CD4-positive, alpha-beta memory T cell (primary cell): ENCODE measurements at regions of chr2 and their contacts with region 1.

Region 1: GRCh38 chr2:29014811-29015421 is 33.8 kb downstream of the TOGARAM2 start:
- DNase-seq: peak; percentile 75 to 88 (median 80)
- H3K4me3 ChIP-seq: peak overlapping the region; percentile 25 to 48
- H3K4me3 Mint-ChIP-seq: peak overlapping the region; percentile 83 to 95 (median 88)
- H3K27ac ChIP-seq: peak overlapping the region; percentile 86
- H3K27ac Mint-ChIP-seq: peak overlapping the region; percentile 99 to 100 (median 100)
- H3K4me1 ChIP-seq: peaks cover 78% of the 10 kb centered on the region
- H3K4me1 Mint-ChIP-seq: peaks cover 62 to 84% (median 72%) of the 10 kb centered on the region in 4 donors
- H3K27me3 ChIP-seq: no peaks in the 10 kb centered on the region
- H3K27me3 Mint-ChIP-seq: no peaks in the 10 kb centered on the region

Region 2: DNA sequence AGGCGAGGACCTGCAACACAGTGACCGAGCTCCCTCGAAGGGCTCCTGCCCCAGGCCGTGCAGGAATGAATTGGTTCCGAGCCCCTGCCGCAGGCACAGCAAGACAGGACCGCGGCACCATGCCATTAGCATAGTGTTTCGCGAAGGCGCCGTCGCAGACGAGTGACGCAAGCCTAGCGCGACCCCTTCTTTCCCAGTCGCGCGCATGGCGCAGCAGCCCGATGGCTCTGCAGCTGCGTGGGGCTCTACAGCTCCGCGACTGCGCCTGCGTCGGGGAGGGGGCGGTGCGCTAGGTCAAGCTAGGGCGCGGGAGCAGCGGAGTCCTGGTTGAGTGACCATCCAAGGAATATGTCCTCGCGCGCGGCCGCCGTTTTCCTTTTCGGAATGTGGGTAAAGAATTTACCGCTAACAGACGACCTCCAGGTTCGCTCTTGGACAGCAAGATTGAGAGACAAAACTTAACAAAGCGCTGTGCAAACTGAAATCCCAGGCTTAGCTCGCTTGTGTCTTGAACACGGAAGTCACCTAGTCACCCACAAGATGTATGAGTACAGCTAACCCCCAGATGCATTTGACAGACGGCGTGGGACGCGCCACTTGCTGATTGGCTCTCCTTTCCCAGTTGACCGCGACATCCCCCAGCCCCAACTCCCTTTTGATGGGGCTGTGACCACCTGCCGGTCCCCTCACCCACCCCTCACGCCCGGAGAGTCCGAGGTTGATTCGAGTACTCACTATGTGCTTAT is 144.6 kb before region 1 on chr2 and contains the start of gene TRMT61B:
- CTCF ChIA-PET with region 1: interaction called, 4 read pairs
- POLR2A ChIA-PET with region 1: interaction called, 13 read pairs
- intact Hi-C with region 1: no loop called
- DNase-seq: peak; percentile 95 to 96 (median 96)
- H3K4me3 ChIP-seq: peak within 1 kb of the TSS; percentile 99
- H3K4me3 Mint-ChIP-seq: peak within 1 kb of the TSS; percentile 93 to 100 (median 96)
- H3K27ac ChIP-seq: peak within 1 kb of the TSS; percentile 95
- H3K27ac Mint-ChIP-seq: peak within 1 kb of the TSS; percentile 98 to 100 (median 100)
- H3K4me1 ChIP-seq: peaks cover 39% of the 10 kb centered on the region
- H3K4me1 Mint-ChIP-seq: peaks cover 20 to 46% (median 31%) of the 10 kb centered on the region in 4 donors
- H3K27me3 ChIP-seq: no peaks in the 10 kb centered on the region
- H3K27me3 Mint-ChIP-seq: peaks cover 0 to 2% of the 10 kb centered on the region in 2 donors
- total RNA-seq, gene TRMT61B: 17.4 TPM

Region 3: GRCh38 chr2:28944535-28945248 is 70.2 kb before region 1 on chr2:
- CTCF ChIA-PET with region 1: no interaction called
- POLR2A ChIA-PET with region 1: no interaction called
- intact Hi-C with region 1: no loop called
- DNase-seq: no peak
- H3K4me3 ChIP-seq: no peak overlapping the region
- H3K4me3 Mint-ChIP-seq: no peak overlapping the region
- H3K27ac ChIP-seq: no peak overlapping the region
- H3K27ac Mint-ChIP-seq: no peak overlapping the region
- H3K4me1 ChIP-seq: no peaks in the 10 kb centered on the region
- H3K4me1 Mint-ChIP-seq: peaks cover 0 to 2% (median 0%) of the 10 kb centered on the region in 4 donors
- H3K27me3 ChIP-seq: no peaks in the 10 kb centered on the region
- H3K27me3 Mint-ChIP-seq: no peaks in the 10 kb centered on the region

Region 4: DNA sequence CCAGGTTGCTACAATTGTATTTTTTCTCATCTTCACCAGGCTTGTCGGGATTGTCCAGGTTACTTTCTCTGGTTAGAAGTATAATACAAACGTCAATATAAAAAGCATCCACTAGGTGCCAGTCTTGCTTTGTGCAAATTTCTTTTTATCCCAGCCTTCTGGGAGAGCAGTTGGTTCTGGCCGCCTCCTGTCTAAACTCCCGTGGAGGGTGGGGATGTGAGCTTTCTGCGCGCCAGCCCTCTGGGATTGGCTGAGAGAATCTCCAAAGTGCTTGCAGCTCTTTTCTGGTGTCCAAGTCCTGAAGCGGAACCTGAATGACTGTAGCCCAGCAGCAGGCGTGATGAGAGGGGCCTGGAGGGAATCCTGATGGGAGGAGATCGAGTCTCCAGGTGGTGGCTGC is 56.2 kb before region 1 on chr2:
- CTCF ChIA-PET with region 1: interaction called, 38 read pairs
- POLR2A ChIA-PET with region 1: interaction called, 9 read pairs
- intact Hi-C with region 1: loop called (anchors 1 kb)
- DNase-seq: peak in 4 of 5 donors; percentile 51 to 67 (median 64)
- H3K4me3 ChIP-seq: no peak overlapping the region
- H3K4me3 Mint-ChIP-seq: no peak overlapping the region
- H3K27ac ChIP-seq: no peak overlapping the region
- H3K27ac Mint-ChIP-seq: peak overlapping the region in 1 of 7 donors; percentile 7
- H3K4me1 ChIP-seq: peaks cover 10% of the 10 kb centered on the region
- H3K4me1 Mint-ChIP-seq: peaks cover 0 to 10% (median 5%) of the 10 kb centered on the region in 4 donors
- H3K27me3 ChIP-seq: no peaks in the 10 kb centered on the region
- H3K27me3 Mint-ChIP-seq: no peaks in the 10 kb centered on the region

Region 5: GRCh38 chr2:29025756-29026155 is 10.8 kb after region 1 on chr2:
- CTCF ChIA-PET with region 1: interaction called, 14 read pairs
- POLR2A ChIA-PET with region 1: interaction called, 5 read pairs
- intact Hi-C with region 1: no loop called
- DNase-seq: no peak
- H3K4me3 ChIP-seq: no peak overlapping the region
- H3K4me3 Mint-ChIP-seq: no peak overlapping the region
- H3K27ac ChIP-seq: no peak overlapping the region
- H3K27ac Mint-ChIP-seq: peak overlapping the region in 1 of 7 donors; percentile 63
- H3K4me1 ChIP-seq: no peaks in the 10 kb centered on the region
- H3K4me1 Mint-ChIP-seq: peaks cover 0 to 7% (median 2%) of the 10 kb centered on the region in 4 donors
- H3K27me3 ChIP-seq: no peaks in the 10 kb centered on the region
- H3K27me3 Mint-ChIP-seq: no peaks in the 10 kb centered on the region

Region 6: DNA sequence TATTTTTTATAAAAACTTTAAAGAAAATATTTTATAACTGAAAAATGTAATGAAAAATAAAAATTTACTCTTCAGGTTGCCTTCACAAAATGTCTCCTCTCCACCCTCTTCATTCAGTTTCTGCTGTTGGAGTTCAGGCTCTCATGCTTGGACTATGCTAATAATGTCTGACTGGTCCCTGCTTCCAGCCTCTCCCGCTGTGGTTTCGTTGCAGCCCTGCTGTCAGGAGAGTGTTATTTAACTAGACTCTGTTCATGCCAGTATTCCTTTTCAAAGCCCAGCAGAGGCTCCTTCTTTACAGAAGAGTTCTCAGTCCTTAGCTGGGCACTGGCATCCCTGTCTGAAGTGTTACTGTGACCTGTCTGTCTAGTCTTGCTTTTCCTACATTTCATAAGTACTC is 140.7 kb after region 1 on chr2:
- CTCF ChIA-PET with region 1: no interaction called
- POLR2A ChIA-PET with region 1: no interaction called
- intact Hi-C with region 1: no loop called
- DNase-seq: no peak
- H3K4me3 ChIP-seq: no peak overlapping the region
- H3K4me3 Mint-ChIP-seq: no peak overlapping the region
- H3K27ac ChIP-seq: no peak overlapping the region
- H3K27ac Mint-ChIP-seq: peak overlapping the region in 2 of 7 donors; percentile 43 to 62
- H3K4me1 ChIP-seq: no peaks in the 10 kb centered on the region
- H3K4me1 Mint-ChIP-seq: peaks cover 0 to 1% (median 0%) of the 10 kb centered on the region in 4 donors
- H3K27me3 ChIP-seq: no peaks in the 10 kb centered on the region
- H3K27me3 Mint-ChIP-seq: no peaks in the 10 kb centered on the region

Region 7: GRCh38 chr2:29196792-29197788 is 182.2 kb after region 1 on chr2:
- CTCF ChIA-PET with region 1: interaction called, 4 read pairs
- POLR2A ChIA-PET with region 1: no interaction called
- intact Hi-C with region 1: loop called (anchors 1 kb)
- DNase-seq: peak; percentile 66 to 79 (median 71)
- H3K4me3 ChIP-seq: no peak overlapping the region
- H3K4me3 Mint-ChIP-seq: no peak overlapping the region
- H3K27ac ChIP-seq: no peak overlapping the region
- H3K27ac Mint-ChIP-seq: peak overlapping the region in 2 of 7 donors; percentile 15 to 81
- H3K4me1 ChIP-seq: no peaks in the 10 kb centered on the region
- H3K4me1 Mint-ChIP-seq: peaks cover 0 to 9% (median 1%) of the 10 kb centered on the region in 4 donors
- H3K27me3 ChIP-seq: no peaks in the 10 kb centered on the region
- H3K27me3 Mint-ChIP-seq: no peaks in the 10 kb centered on the region